HepG2 (cell line): ENCODE measurements at regions of chr2 and their contacts with region 1.

Region 1: GRCh38 chr2:175766880-175767279 is 235.2 kb downstream of the LNPK start:
- DNase-seq: peak; percentile 54
- ATAC-seq: peak; percentile 88
- H3K4me3 ChIP-seq: no peak overlapping the region
- H3K27ac ChIP-seq: peak overlapping the region; percentile 39
- H3K4me1 ChIP-seq: peaks cover 13% of the 10 kb centered on the region; the same call in 1 of the 2 replicates
- H3K27me3 ChIP-seq: no peaks in the 10 kb centered on the region
- CTCF ChIP-seq: no peak
- EP300 ChIP-seq: 0 out of 4 replicates have a peak, but pooled peaks of 1 of the 2 experiments have one; percentile 20
- POLR2A ChIP-seq: no peak
- RAD21 ChIP-seq: no peak

Region 2: DNA sequence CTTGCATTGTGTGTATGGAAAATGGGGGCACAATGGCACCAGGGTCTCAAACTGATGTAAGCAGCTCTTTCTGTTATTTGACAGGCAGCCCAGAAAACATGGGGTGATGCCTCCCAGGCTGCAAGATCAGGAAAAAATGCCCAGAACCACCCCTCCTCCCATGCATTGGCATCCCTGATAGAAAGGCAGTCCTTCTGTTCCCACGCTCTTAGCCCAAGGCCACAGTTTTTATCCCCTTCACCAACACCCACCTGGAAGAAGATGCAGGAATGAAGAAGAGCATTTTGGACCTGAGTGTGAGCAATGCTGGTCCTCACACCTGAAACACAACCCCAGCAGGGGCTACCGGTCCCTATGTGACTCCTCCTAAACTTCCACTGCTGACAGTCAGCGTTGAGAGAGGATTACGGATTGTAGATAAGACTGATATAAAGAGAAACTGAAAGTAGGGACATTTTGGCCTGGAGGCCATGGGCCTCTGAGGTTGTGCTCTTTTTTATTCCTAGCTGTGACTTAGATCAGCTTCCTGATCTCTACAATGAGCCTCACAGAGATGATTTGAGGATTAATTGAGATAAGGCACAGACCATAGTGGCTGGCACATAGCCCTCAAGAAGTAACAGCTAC is 199.3 kb before region 1 on chr2:
- CTCF ChIA-PET with region 1: no interaction called
- POLR2A ChIA-PET with region 1: no interaction called
- in situ Hi-C with region 1: no loop called
- intact Hi-C with region 1: loop called (anchors 5 kb)
- DNase-seq: no peak
- ATAC-seq: no peak; the same call in 2 of the 3 replicates
- H3K4me3 ChIP-seq: peak overlapping the region in 1 of 3 experiments; percentile 13; a peak in 1 of 6 replicates
- H3K27ac ChIP-seq: no peak overlapping the region
- H3K4me1 ChIP-seq: no peaks in the 10 kb centered on the region
- H3K27me3 ChIP-seq: peaks cover 0 to 4% of the 10 kb centered on the region in 2 experiments; a peak in 2 of 5 replicates
- CTCF ChIP-seq: no peak
- EP300 ChIP-seq: no peak
- POLR2A ChIP-seq: no peak
- RAD21 ChIP-seq: no peak

Region 3: GRCh38 chr2:175755169-175755568 is 11.7 kb before region 1 on chr2:
- CTCF ChIA-PET with region 1: no interaction called
- POLR2A ChIA-PET with region 1: no interaction called
- in situ Hi-C with region 1: no loop called
- intact Hi-C with region 1: no loop called
- DNase-seq: no peak
- ATAC-seq: peak; percentile 38; the same call in 1 of the 3 replicates
- H3K4me3 ChIP-seq: no peak overlapping the region
- H3K27ac ChIP-seq: no peak overlapping the region
- H3K4me1 ChIP-seq: peaks cover 30% of the 10 kb centered on the region
- H3K27me3 ChIP-seq: no peaks in the 10 kb centered on the region
- CTCF ChIP-seq: no peak
- EP300 ChIP-seq: no peak
- POLR2A ChIP-seq: no peak
- RAD21 ChIP-seq: no peak